Astrocyte of the cerebellum (primary cell): ENCODE measurements at regions of chr13 and their contacts with region 1.

Region 1: GRCh38 chr13:104571161-104571892 is 1505.1 kb upstream of the SLC10A2 start:
- DNase-seq: peak; percentile 93
- H3K4me3 ChIP-seq: peak overlapping the region; percentile 24
- CTCF ChIP-seq: peak; percentile 95

Region 2: DNA sequence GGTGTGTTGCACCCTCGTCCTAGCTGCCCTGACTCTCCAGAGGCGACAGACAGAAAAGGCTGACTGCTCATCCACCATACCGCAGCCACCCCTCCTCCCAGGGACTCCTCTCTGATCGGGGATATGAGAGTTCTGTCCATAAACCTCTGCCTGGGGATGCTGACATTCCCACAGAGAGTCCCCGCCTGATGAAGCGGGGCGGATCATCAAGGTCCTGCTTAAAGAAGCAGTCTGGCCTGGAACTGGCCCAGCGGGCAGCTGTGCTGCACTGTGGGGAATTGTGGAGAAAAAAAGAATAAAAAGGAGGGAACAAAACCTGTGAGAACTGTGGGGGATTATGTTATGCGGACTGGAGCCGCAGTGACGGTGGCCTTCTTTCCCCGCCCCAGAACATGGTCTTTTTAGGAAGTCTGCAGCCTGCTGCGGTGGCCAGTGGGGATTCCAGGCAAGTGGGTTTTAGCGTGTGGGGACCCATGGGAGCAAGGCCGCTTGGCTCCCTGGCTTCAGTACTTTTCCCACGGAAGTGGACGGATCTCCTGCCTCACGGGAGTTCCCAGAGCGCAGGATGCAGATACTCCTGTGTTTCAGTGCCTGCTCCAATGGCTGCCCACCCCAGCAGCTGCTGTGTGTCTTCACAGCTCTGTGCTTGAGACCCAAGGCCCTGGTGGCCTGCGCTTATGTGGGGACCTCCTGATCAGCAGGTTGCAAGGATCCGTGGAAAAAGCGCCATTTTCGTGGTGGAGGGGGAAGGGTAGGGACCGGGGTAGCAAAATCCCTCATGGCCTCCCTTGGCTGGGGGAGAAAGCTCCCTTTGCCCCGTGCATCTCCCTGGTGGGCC is 48.9 kb before region 1 on chr13:
- in situ Hi-C with region 1: no loop called
- DNase-seq: no peak
- H3K4me3 ChIP-seq: no peak overlapping the region
- CTCF ChIP-seq: no peak

Region 3: DNA sequence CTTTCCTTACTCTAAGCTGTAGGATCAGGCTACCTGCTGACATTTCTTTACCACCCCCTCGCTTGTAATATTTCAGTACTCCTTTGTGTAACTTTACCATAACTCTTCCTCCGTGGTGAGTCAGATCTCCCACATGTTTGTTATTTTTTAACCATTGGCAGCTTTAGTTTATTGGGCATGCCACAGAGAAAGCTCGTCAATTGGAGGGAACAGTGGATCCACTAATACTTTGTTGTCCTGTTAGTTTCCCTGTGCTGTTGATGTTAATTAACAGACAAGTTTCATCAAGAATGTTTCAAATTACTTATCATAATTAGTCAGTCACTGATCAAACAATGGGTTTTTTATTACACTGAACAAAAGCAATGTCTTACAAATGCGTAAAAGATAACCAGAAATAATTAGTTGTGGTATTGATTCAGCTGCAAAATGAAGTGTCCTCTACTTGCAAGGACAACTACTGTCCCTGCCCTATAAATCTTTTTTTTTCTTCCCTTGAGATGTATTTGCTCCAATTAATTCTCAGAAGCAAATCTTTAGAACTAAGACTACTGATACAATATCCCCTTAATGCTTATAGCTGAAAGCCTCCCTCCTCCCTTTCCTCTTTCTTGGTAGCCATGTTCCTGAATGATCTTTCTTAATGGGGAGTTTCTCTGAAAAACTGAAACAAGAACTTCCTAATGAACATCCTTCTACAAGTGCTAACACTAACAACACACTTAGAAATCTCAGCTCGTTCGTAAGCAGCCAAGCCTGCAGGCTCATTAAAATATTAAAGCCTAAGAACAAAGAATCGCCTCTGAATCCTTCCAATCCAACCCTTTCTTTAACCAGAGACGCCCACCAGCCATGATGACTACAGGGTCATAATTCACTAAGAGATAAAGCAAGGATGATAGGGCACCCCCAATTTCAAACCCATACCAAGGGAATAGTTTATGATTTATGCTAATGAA is 1942.0 kb after region 1 on chr13:
- in situ Hi-C with region 1: loop called (anchors 10 kb)
- DNase-seq: no peak
- H3K4me3 ChIP-seq: no peak overlapping the region
- CTCF ChIP-seq: no peak